Motor neuron (in vitro differentiated cells): ENCODE measurements at regions of chr6 and their contacts with region 1.

Region 1: DNA sequence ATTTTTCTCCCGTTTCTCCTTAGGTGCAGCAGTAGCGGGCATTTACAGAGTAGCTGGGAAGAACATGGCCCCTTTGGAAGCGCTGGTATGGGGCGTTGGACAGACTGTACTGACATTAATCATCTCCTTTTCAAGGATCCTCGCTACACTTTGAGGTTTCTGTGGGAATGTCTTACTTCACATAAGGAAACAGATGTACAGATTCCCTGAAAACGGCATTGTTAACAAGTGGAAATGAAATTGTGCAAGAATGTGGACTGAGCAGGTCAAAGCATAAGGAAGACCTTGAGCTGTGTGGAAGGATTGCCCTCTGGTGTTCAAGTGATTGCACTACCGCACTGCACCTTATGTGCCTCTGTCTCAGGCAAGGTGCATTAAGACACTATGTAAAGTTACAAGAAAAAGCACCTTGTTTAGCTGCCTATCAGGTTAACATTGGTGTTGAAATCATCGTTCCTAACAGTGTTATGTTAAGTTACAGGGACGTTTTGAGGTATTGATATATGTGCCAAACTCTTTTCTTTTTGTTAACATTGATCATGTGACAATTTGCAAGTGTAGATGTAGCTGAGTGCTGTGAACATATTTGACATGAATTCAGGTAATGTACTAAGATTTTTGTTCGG is 38.0 kb downstream of the TMEM170B start:
- ATAC-seq: peak; percentile 86 to 100 (median 99)
- H3K4me3 ChIP-seq: no peak overlapping the region
- H3K27ac ChIP-seq: no peak overlapping the region
- H3K4me1 ChIP-seq: no peaks in the 10 kb centered on the region

Region 2: DNA sequence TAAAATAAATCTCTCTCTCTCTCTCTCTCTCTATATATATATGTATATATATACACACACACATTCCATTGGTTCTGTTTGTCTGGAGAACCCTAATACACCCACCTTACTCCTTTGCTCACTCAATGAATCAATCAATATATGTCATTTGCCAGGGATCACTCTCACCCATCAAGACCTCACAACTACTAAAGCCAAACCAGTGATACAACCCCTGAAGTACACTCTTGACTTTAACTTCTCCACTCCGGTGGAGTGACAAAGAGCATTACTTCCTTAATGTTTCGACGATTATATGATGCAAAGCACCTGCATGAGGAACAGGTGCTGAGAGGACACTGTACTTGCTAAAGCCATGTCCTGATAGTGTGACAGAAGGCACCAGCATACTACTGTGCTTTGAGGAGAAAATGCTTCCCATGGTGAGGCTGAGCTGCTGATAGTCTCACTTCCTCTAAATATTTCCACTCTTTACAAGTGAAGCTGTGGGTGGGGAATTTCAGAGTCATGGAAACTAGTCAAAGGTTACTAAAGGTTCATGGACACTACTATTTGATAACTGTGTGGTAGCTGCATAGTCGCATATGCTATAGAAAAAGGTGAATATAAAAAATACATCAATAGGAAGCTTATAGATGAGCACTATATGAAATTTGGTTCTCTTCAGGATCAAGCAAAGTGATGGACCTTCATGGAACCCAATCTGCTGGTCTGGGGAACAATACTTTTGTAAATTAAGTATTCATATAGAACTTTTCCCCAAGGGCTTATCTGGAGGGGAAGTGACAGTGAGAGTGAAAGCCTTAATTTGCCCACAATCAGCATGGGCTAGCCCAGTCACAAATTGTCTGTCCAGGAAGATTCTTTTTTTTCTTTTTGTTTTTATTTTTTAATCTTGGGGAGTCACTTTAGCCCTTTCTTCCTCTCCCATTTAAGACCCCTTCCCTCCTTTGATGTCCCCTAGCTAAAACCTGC is 201.2 kb before region 1 on chr6:
- in situ Hi-C with region 1: no loop called
- ATAC-seq: no peak
- H3K4me3 ChIP-seq: no peak overlapping the region
- H3K27ac ChIP-seq: no peak overlapping the region
- H3K4me1 ChIP-seq: peaks cover 0 to 10% of the 10 kb centered on the region in 2 donors

Region 3: DNA sequence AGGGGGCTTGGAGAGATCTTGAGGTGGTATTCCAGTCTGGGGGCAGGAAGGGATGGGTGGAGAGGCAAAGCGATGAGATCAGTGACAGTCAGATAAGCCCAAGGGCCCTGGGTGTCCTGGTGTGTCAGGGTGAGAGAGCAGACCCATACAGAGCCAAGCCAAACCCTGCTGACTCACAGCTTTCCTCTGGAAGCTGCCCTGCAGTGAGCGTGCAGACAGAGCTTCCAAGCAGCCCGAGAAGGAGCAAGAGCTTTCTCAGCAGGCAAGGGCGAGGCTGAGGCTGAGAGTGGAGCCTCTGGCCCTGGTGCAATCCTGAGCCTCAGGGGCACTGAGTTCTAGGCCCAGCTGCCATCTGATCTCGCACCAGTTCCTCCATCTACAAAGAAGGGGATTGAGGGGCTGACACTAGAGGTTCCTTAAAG is 345.5 kb after region 1 on chr6:
- in situ Hi-C with region 1: no loop called
- ATAC-seq: peak; percentile 46 to 95 (median 64)
- H3K4me3 ChIP-seq: no peak overlapping the region
- H3K27ac ChIP-seq: no peak overlapping the region
- H3K4me1 ChIP-seq: peaks cover 20 to 22% of the 10 kb centered on the region in 2 donors

Region 4: GRCh38 chr6:12233693-12234571 is 658.4 kb after region 1 on chr6:
- in situ Hi-C with region 1: loop called in 1 of 9 experiments (anchors 25 kb)
- ATAC-seq: peak; percentile 59 to 92 (median 78)
- H3K4me3 ChIP-seq: no peak overlapping the region
- H3K27ac ChIP-seq: no peak overlapping the region
- H3K4me1 ChIP-seq: no peaks in the 10 kb centered on the region

Region 5: GRCh38 chr6:12595161-12595811 is 1019.8 kb after region 1 on chr6:
- in situ Hi-C with region 1: loop called in 1 of 9 experiments (anchors 25 kb)
- ATAC-seq: peak in 3 of 8 experiments; percentile 7 to 44 (median 27)
- H3K4me3 ChIP-seq: no peak overlapping the region
- H3K27ac ChIP-seq: no peak overlapping the region
- H3K4me1 ChIP-seq: peaks cover 6 to 14% of the 10 kb centered on the region in 2 donors